Common myeloid progenitor, CD34-positive (primary cell): ENCODE measurements at regions of chr1 and their contacts with region 1.

Region 1: DNA sequence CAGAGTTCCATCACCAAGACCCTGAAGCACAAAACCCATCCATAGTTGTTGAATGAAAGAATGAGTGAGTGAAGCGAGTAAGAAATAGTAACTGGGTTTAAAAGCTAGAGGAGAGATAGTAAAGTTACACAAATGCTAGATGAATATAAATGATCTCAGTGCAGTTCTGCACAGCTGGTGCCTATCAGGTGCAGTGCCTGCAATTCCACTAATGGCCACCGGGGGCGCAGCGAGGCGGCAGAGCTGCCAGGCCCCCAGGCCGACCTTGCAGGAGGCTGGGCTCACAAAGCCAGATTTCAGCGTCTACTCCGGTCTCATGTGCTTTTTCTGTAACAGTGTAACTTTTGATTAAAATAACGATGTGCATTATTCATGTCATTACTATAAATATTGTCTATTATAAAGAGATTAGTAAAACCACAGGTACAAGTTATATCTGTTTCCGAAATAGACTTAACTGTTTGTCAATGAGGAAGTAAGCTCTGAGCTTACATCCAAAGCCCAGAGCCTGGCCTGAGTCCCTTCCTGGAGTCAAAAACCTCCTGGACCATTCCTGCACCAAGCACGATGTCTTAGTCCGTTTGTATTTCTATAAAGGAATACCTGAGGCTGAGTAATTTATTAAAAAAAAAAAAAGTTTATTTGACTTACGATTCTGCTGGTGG is 477.6 kb downstream of the NPHP4 start:
- DNase-seq: peak; percentile 60 to 76 (median 74)
- H3K4me3 ChIP-seq: no peak overlapping the region
- H3K27ac ChIP-seq: no peak overlapping the region
- H3K4me1 ChIP-seq: peaks cover 0 to 21% (median 6%) of the 10 kb centered on the region in 4 experiments
- H3K27me3 ChIP-seq: peaks cover 0 to 9% (median 0%) of the 10 kb centered on the region in 5 experiments

Region 2: DNA sequence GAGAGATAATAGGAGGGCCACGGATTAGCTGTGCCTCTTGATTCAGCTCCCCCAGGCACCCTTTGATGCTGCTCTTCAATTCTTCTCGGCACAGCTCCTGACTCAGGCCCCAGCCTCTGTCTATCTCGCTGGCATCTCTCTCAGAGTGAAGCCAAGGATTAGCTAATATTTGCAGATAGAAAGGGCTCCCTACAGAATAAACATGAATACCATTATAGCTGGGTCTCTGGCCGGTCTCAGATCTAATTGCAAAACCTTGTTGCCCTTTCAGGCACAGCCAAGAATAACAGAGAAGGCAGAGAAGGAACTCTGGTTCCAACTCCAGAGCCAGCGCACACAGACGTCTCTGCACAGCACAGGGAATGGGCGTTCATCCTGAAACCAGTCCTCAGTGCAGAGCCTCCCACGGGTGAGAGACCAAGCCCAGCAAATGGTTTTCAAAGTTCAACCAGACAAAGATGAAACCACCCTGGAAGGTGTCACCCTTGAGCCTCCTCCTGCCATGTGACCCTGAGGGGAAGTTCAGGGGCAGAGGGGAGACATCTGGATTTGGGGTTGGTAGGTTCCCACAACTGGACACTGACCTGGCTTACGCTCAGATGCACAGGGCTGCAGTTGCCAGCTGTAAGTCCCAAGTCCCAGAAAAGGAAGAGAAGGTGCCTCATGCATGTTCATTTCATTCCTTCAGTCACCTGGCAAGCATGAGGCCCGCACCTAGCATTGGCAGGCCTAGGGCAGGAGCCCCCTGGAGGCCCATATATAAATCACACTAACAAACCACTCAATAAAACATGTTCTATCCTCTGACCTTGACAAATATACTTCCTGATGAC is 83.6 kb after region 1 on chr1:
- CTCF ChIA-PET with region 1: interaction called, 19 read pairs
- POLR2A ChIA-PET with region 1: no interaction called
- DNase-seq: peak in 2 of 3 donors; percentile 1 to 13
- H3K4me3 ChIP-seq: no peak overlapping the region
- H3K27ac ChIP-seq: no peak overlapping the region
- H3K4me1 ChIP-seq: no peaks in the 10 kb centered on the region
- H3K27me3 ChIP-seq: peaks cover 0 to 17% (median 0%) of the 10 kb centered on the region in 5 experiments

Region 3: GRCh38 chr1:5620990-5621389 is 106.3 kb after region 1 on chr1:
- CTCF ChIA-PET with region 1: interaction called, 18 read pairs
- POLR2A ChIA-PET with region 1: interaction called, 3 read pairs
- DNase-seq: peak; percentile 20 to 37 (median 35)
- H3K4me3 ChIP-seq: no peak overlapping the region
- H3K27ac ChIP-seq: no peak overlapping the region
- H3K4me1 ChIP-seq: peaks cover 0 to 2% (median 0%) of the 10 kb centered on the region in 4 experiments
- H3K27me3 ChIP-seq: peaks cover 0 to 42% (median 4%) of the 10 kb centered on the region in 5 experiments

Region 4: DNA sequence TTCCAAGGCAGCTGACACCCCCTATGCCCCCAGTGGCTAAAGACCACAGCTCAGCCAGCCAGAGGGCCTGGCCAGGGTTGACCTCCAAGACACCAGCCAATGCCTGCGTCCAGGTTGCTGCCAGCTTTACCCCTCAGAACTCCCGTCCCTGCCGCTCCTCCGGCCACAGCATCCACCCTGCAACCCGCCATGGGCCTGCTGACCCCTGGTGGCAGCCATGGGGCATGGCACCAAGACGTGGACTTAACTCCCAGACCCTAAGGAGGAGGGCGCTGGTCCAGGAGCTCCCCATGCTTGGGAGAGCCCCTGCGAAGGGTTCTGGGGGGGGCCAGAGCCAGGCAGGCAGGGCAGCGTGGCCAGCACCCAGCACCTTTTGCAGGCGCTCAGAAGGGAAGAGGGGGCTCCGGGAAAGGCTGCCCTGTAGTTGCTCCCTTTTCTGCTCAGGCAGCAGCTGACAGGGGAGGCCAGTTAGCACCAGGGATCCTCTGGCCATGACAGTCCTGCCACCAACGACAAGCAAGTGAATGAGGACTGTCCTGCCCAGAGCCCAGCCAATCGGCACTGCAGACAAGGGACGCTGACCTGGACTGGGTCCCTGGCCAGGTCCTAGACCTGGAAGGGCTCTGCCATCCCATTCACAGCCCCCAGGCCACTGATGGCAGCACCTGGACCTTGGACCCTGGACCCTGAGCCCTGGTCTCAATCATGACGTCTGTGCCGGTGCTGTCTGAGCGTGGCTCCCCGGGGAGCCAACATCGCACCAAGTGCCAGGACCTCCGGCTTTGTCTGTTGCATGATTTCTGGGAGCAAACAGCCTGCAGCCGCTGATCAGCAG is 231.3 kb after region 1 on chr1:
- CTCF ChIA-PET with region 1: interaction called, 20 read pairs
- POLR2A ChIA-PET with region 1: no interaction called
- DNase-seq: peak; percentile 63 to 80 (median 74)
- H3K4me3 ChIP-seq: peak overlapping the region in 1 of 7 experiments; percentile 19
- H3K27ac ChIP-seq: no peak overlapping the region
- H3K4me1 ChIP-seq: peaks cover 0 to 21% (median 10%) of the 10 kb centered on the region in 4 experiments
- H3K27me3 ChIP-seq: peaks cover 0 to 37% (median 11%) of the 10 kb centered on the region in 5 experiments

Region 5: GRCh38 chr1:5798151-5798730 is 283.6 kb after region 1 on chr1:
- CTCF ChIA-PET with region 1: no interaction called
- POLR2A ChIA-PET with region 1: no interaction called
- DNase-seq: no peak
- H3K4me3 ChIP-seq: no peak overlapping the region
- H3K27ac ChIP-seq: no peak overlapping the region
- H3K4me1 ChIP-seq: no peaks in the 10 kb centered on the region
- H3K27me3 ChIP-seq: peaks cover 0 to 34% (median 0%) of the 10 kb centered on the region in 5 experiments

Region 6: GRCh38 chr1:5975133-5975880 is 460.7 kb after region 1 on chr1:
- CTCF ChIA-PET with region 1: interaction called, 19 read pairs
- POLR2A ChIA-PET with region 1: no interaction called
- DNase-seq: peak; percentile 57 to 84 (median 81)
- H3K4me3 ChIP-seq: no peak overlapping the region
- H3K27ac ChIP-seq: no peak overlapping the region
- H3K4me1 ChIP-seq: peaks cover 0 to 5% (median under 1%) of the 10 kb centered on the region in 4 experiments
- H3K27me3 ChIP-seq: no peaks in the 10 kb centered on the region